Common myeloid progenitor, CD34-positive (primary cell): ENCODE measurements at regions of chr18 and their contacts with region 1.

Region 1: DNA sequence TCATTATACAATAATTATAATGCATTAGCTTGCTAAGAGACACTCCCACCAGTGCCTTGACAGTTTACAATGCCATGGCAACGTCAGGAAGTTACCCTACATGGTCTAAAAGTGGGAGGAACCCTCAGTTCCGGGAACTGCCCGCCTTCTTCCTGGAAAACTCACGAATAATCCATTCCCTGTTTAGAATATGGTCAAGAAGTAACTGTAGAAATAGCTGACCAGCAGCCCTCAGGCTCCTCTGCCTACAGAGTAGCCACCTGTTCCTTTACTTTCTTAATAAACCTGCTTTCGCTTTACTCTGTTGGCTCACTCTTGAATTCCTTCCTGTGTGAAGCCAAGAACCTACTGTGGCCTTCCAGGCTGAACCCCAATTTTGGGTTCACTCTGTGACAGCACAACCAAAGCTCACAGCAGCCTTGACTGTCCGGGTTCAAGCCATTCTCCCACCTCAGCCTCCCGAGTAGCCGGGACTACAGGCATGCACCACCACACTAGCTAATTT is 20.0 kb upstream of the PTPN2 start:
- DNase-seq: peak in 1 of 3 donors; percentile 31
- H3K4me3 ChIP-seq: no peak overlapping the region
- H3K27ac ChIP-seq: peak overlapping the region in 1 of 2 experiments; percentile 43
- H3K4me1 ChIP-seq: peaks cover 0 to 7% (median 2%) of the 10 kb centered on the region in 4 experiments
- H3K27me3 ChIP-seq: peaks cover 0 to 13% (median 4%) of the 10 kb centered on the region in 5 experiments

Region 2: DNA sequence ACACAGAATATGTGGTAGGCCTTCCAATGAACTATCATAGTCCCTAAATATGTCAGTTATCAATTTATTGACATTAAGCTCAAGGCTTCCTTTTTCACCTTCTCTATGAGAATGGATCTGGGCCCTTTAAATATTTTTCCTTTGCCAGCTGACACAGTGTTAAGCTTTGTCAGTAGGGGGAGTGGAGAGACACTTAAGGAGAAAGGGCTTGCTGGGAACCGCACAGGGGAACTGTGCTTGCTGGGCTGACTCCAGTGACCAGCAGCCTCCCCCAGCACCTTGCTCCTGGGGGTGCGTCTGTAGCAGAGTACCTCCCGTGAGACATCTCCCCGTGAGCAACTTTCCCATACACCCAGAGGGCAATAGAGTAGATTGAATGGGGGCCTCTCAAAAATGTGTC is 13.6 kb before region 1 on chr18:
- CTCF ChIA-PET with region 1: interaction called, 44 read pairs
- POLR2A ChIA-PET with region 1: no interaction called
- DNase-seq: peak in 1 of 3 donors; percentile 20
- H3K4me3 ChIP-seq: no peak overlapping the region
- H3K27ac ChIP-seq: no peak overlapping the region
- H3K4me1 ChIP-seq: no peaks in the 10 kb centered on the region
- H3K27me3 ChIP-seq: peaks cover 0 to 6% (median 0%) of the 10 kb centered on the region in 5 experiments